ENCODE measurements at regions of chr7 and their contacts with region 1.

Region 1: GRCh38 chr7:140175221-140176121 is 1.3 kb downstream of the KDM7A start:
- DNase-seq: peak; percentile 69 to 95 (median 92)
- ATAC-seq: peak; percentile 73
- H3K4me3 ChIP-seq: peak overlapping the region; percentile 63
- H3K4me3 Mint-ChIP-seq: peak overlapping the region; percentile 68 to 94 (median 89)
- H3K27ac ChIP-seq: peak overlapping the region; percentile 92
- H3K27ac Mint-ChIP-seq: peak overlapping the region; percentile 81 to 98 (median 93)
- H3K4me1 ChIP-seq: peaks cover 25 to 26% of the 10 kb centered on the region in 2 donors
- H3K4me1 Mint-ChIP-seq: peaks cover 29 to 61% (median 52%) of the 10 kb centered on the region in 7 donors
- H3K27me3 ChIP-seq: no peaks in the 10 kb centered on the region
- H3K27me3 Mint-ChIP-seq: peaks cover 0 to 4% (median 0%) of the 10 kb centered on the region in 5 donors

Region 2: GRCh38 chr7:139635526-139636302 is 539.8 kb before region 1 on chr7:
- CTCF ChIA-PET with region 1: no interaction called
- POLR2A ChIA-PET with region 1: interaction called, 3 read pairs
- intact Hi-C with region 1: loop called in 1 of 2 experiments (anchors 5 kb)
- DNase-seq: peak; percentile 45 to 94 (median 91)
- ATAC-seq: peak; percentile 95
- H3K4me3 ChIP-seq: peak overlapping the region; percentile 31
- H3K4me3 Mint-ChIP-seq: peak overlapping the region; percentile 64 to 92 (median 84)
- H3K27ac ChIP-seq: peak overlapping the region; percentile 78
- H3K27ac Mint-ChIP-seq: peak overlapping the region; percentile 90 to 99 (median 98)
- H3K4me1 ChIP-seq: peaks cover 4 to 53% of the 10 kb centered on the region in 2 donors
- H3K4me1 Mint-ChIP-seq: peaks cover 46 to 92% (median 80%) of the 10 kb centered on the region in 7 donors
- H3K27me3 ChIP-seq: no peaks in the 10 kb centered on the region
- H3K27me3 Mint-ChIP-seq: no peaks in the 10 kb centered on the region

Region 3: DNA sequence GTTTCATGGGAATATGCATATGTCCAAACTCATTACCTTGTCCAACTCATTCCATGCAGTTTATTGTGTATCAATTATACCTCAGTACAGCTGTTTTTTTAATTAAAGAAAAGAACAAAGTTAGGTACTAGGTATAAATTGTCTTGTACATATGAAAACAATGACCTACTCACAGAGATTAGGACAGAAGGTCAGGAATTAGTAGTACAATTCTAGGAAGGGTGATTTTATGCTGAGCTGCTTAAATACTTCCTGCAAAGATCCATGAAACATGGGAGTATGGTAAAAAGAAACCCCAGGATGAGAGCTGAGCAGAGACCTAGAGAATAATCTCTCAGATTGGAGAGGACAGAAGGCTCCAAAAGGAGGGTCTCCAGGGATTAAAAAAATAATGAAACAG is 15.1 kb after region 1 on chr7:
- CTCF ChIA-PET with region 1: no interaction called
- POLR2A ChIA-PET with region 1: interaction called, 54 read pairs
- intact Hi-C with region 1: loop called in 1 of 2 experiments (anchors 1 kb)
- DNase-seq: no peak
- ATAC-seq: no peak
- H3K4me3 ChIP-seq: no peak overlapping the region
- H3K4me3 Mint-ChIP-seq: no peak overlapping the region
- H3K27ac ChIP-seq: no peak overlapping the region
- H3K27ac Mint-ChIP-seq: peak overlapping the region in 1 of 9 donors; percentile 76
- H3K4me1 ChIP-seq: no peaks in the 10 kb centered on the region
- H3K4me1 Mint-ChIP-seq: peaks cover 0 to 11% (median 4%) of the 10 kb centered on the region in 7 donors
- H3K27me3 ChIP-seq: no peaks in the 10 kb centered on the region
- H3K27me3 Mint-ChIP-seq: peaks cover 0 to 20% (median 0%) of the 10 kb centered on the region in 5 donors

Region 4: DNA sequence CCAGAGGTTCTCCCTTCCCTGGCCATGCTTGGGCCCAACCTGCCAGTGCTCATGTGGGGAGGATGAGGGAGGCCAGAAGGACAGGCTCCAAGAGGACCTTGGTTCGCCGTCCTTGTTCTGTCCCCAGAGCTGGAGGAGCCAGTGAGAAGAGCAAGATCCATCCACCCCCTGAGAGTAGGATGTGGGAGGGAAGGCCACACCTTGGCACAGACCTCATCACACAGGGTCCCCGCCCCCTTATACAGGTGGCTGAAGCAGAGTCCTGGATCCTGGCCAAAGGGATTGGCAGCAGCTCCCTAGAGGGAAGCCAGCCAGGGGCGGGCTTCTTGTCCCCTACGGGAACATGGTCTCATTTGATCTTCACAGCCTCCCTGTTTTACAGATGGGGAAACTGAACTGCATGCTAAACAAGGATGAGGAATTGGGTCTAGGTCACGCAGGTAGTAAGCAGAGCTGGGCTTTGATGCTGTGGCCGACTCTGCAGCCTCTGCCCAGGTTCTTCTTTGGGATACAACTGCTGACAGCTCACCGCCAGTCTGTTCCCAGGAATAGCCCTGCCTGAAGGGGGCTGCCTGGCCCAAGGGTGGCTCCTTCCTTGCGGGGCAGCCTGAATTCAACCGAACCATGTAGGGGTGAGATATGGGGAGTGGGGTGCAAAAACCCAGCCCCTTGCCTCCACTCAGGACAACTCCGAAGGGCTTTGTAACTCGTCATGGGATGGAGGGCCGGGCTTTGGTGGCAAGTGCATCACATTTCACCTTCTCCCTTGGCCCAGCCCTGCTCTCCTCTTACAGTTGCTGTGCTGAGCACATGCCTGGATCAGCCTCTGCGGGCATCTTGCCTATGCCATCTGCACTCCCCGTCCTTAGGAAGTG is 63.5 kb after region 1 on chr7:
- CTCF ChIA-PET with region 1: interaction called, 3 read pairs
- POLR2A ChIA-PET with region 1: interaction called, 409 read pairs
- intact Hi-C with region 1: loop called in 1 of 2 experiments (anchors 1 kb)
- DNase-seq: no peak
- ATAC-seq: no peak
- H3K4me3 ChIP-seq: no peak overlapping the region
- H3K4me3 Mint-ChIP-seq: no peak overlapping the region
- H3K27ac ChIP-seq: no peak overlapping the region
- H3K27ac Mint-ChIP-seq: peak overlapping the region in 1 of 9 donors; percentile 41
- H3K4me1 ChIP-seq: no peaks in the 10 kb centered on the region
- H3K4me1 Mint-ChIP-seq: peaks cover 0 to 25% (median 13%) of the 10 kb centered on the region in 7 donors
- H3K27me3 ChIP-seq: no peaks in the 10 kb centered on the region
- H3K27me3 Mint-ChIP-seq: no peaks in the 10 kb centered on the region

Region 5: DNA sequence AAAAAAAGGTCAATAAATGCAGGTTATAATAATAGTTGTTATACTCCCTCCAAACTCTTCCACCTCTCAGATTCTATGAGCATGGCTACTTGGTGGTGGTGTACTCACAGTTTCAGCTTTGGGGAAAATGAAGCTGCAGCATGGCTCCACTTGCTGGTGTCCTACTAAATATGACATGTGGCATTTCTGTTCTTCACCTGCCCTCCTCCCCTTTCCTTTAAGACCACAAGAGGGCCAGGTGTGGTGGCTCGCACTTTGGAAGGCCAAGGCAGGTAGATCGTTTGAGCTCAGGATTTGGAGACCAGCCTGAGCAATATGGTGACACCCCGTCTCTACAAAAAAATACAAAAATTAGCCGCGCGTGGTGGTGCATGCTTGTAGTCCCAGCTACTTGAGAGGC is 121.7 kb after region 1 on chr7:
- CTCF ChIA-PET with region 1: no interaction called
- POLR2A ChIA-PET with region 1: interaction called, 5 read pairs
- intact Hi-C with region 1: loop called in 1 of 2 experiments (anchors 1 kb)
- DNase-seq: peak in 4 of 9 donors; percentile 11 to 30 (median 12)
- ATAC-seq: no peak
- H3K4me3 ChIP-seq: no peak overlapping the region
- H3K4me3 Mint-ChIP-seq: no peak overlapping the region
- H3K27ac ChIP-seq: no peak overlapping the region
- H3K27ac Mint-ChIP-seq: peak overlapping the region in 2 of 9 donors; percentile 9 to 20
- H3K4me1 ChIP-seq: no peaks in the 10 kb centered on the region
- H3K4me1 Mint-ChIP-seq: peaks cover 0 to 10% (median 4%) of the 10 kb centered on the region in 7 donors
- H3K27me3 ChIP-seq: no peaks in the 10 kb centered on the region
- H3K27me3 Mint-ChIP-seq: no peaks in the 10 kb centered on the region

Region 6: GRCh38 chr7:140403878-140404564 is 228.6 kb after region 1 on chr7 and contains the start of gene RAB19:
- CTCF ChIA-PET with region 1: no interaction called
- POLR2A ChIA-PET with region 1: no interaction called
- intact Hi-C with region 1: loop called in 1 of 2 experiments (anchors 2 kb)
- DNase-seq: peak; percentile 7 to 67 (median 56)
- ATAC-seq: peak; percentile 87
- H3K4me3 ChIP-seq: peak within 1 kb of the TSS; percentile 82
- H3K4me3 Mint-ChIP-seq: peak within 1 kb of the TSS; percentile 92 to 99 (median 97)
- H3K27ac ChIP-seq: peak within 1 kb of the TSS; percentile 87
- H3K27ac Mint-ChIP-seq: peak within 1 kb of the TSS; percentile 91 to 99 (median 96)
- H3K4me1 ChIP-seq: peaks cover 8 to 11% of the 10 kb centered on the region in 2 donors
- H3K4me1 Mint-ChIP-seq: peaks cover 13 to 42% (median 29%) of the 10 kb centered on the region in 7 donors
- H3K27me3 ChIP-seq: no peaks in the 10 kb centered on the region
- H3K27me3 Mint-ChIP-seq: peaks cover 0 to 3% (median 0%) of the 10 kb centered on the region in 5 donors
- total RNA-seq, gene RAB19: 1.8 to 13.3 (median 3.3) TPM

Region 7: GRCh38 chr7:141014524-141015395 is 839.3 kb after region 1 on chr7 and contains the start of gene MRPS33:
- CTCF ChIA-PET with region 1: no interaction called
- POLR2A ChIA-PET with region 1: no interaction called
- intact Hi-C with region 1: loop called (anchors 1 to 2 kb)
- DNase-seq: peak; percentile 79 to 97 (median 96)
- ATAC-seq: peak; percentile 99
- H3K4me3 ChIP-seq: peak within 1 kb of the TSS; percentile 82
- H3K4me3 Mint-ChIP-seq: peak within 1 kb of the TSS; percentile 85 to 99 (median 98)
- H3K27ac ChIP-seq: peak within 1 kb of the TSS; percentile 95
- H3K27ac Mint-ChIP-seq: peak within 1 kb of the TSS; percentile 97 to 100 (median 100)
- H3K4me1 ChIP-seq: peaks cover 8 to 16% of the 10 kb centered on the region in 2 donors
- H3K4me1 Mint-ChIP-seq: peaks cover 10 to 49% (median 39%) of the 10 kb centered on the region in 7 donors
- H3K27me3 ChIP-seq: no peaks in the 10 kb centered on the region
- H3K27me3 Mint-ChIP-seq: peaks cover 5 to 29% (median 8%) of the 10 kb centered on the region in 5 donors
- total RNA-seq, gene MRPS33: 25.9 to 69.1 (median 48.4) TPM